OCI-LY7 (cell line): ENCODE measurements at regions of chr16 and their contacts with region 1.

Region 1: GRCh38 chr16:71961066-71962039 is 38.8 kb downstream of the PKD1L3 start:
- DNase-seq: peak; percentile 90
- H3K4me3 ChIP-seq: no peak overlapping the region
- H3K27ac ChIP-seq: peak overlapping the region; percentile 58
- H3K4me1 ChIP-seq: peaks cover 57% of the 10 kb centered on the region
- CTCF ChIP-seq: peak; percentile 96

Region 2: GRCh38 chr16:71564155-71564967 is 397.0 kb before region 1 on chr16:
- CTCF ChIA-PET with region 1: no interaction called
- POLR2A ChIA-PET with region 1: no interaction called
- intact Hi-C with region 1: loop called (anchors 5 kb)
- DNase-seq: no peak
- H3K4me3 ChIP-seq: peak overlapping the region; percentile 67
- H3K27ac ChIP-seq: peak overlapping the region; percentile 97
- H3K4me1 ChIP-seq: peaks cover 29% of the 10 kb centered on the region
- CTCF ChIP-seq: no peak

Region 3: GRCh38 chr16:71723537-71724319 is 237.6 kb before region 1 on chr16:
- CTCF ChIA-PET with region 1: no interaction called
- POLR2A ChIA-PET with region 1: interaction called, 4 read pairs
- intact Hi-C with region 1: loop called (anchors 5 kb)
- DNase-seq: peak; percentile 88
- H3K4me3 ChIP-seq: peak overlapping the region; percentile 94
- H3K27ac ChIP-seq: peak overlapping the region; percentile 66
- H3K4me1 ChIP-seq: peaks cover 52% of the 10 kb centered on the region
- CTCF ChIP-seq: peak; percentile 28; the same call in 1 of the 2 replicates

Region 4: DNA sequence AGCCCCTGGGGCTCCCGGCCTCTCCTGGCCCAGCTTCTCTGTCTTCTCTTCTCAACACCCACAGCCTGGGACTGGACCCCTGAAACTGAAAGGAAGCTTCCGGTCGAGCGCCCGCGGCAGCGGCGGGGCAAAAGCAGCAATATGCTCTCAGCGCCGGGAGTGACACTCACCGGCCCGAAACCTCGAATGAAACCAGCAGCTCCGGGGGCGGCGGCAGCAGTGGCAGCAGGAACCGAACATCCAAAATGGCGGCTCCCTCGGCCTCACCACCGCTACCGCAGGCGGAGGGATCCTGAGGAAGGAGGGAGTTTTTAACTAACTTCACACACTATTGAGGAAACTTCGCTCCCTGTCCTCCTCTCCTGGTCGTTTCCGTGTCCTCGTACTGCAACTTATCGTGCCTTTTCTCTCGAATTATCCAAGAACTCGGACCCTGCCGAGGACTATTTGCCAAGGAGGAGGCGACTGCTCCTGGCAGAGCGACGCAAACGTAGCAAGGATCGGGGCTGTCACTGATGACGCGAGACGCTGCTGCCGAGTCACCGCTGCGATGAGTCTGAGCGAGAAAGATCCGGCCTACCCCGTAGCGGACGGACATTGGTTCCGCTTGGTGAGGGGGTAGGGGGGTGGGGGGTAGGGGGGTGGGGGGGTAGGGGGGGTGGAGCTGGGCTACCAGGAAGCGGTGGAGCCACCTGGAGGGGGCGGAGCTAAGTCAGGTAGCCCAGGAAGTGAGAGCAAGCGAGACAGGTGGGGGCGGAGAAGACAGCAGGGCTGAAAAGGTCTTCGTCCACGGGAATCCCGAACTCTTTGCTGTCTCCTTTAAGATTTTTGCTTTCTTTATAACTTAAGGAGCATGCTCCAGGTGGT is 152.5 kb before region 1 on chr16 and contains the start of gene AP1G1:
- CTCF ChIA-PET with region 1: no interaction called
- POLR2A ChIA-PET with region 1: no interaction called
- intact Hi-C with region 1: loop called (anchors 2 kb)
- DNase-seq: peak; percentile 99
- H3K4me3 ChIP-seq: peak within 1 kb of the TSS; percentile 98
- H3K27ac ChIP-seq: peak within 1 kb of the TSS; percentile 85
- H3K4me1 ChIP-seq: peaks cover 23% of the 10 kb centered on the region
- CTCF ChIP-seq: no peak
- total RNA-seq, gene AP1G1: 57.3 and 57.9 TPM in 2 replicates

Region 5: DNA sequence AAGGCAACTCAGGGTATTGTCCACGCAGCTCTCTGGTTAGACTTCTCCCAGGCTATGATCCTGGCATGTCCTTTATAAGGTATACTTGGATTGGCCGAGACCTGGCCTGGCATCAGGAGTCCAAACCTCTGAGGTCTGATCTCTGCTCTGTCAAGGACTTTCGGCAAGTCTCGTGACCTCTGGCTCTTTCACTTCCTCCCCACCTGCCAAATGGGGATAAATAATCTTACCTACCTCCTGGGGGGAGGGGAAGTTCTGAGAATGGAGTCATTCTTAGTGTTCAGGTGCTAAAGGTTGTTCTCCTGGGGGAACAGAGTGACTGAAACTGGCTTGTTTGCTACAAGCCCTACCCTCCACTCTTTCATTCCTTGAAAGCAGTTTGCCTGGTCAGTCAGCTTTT is 107.9 kb before region 1 on chr16:
- CTCF ChIA-PET with region 1: no interaction called
- POLR2A ChIA-PET with region 1: no interaction called
- intact Hi-C with region 1: loop called (anchors 2 kb)
- DNase-seq: peak; percentile 87
- H3K4me3 ChIP-seq: peak overlapping the region; percentile 38
- H3K27ac ChIP-seq: no peak overlapping the region
- H3K4me1 ChIP-seq: peaks cover 37% of the 10 kb centered on the region
- CTCF ChIP-seq: no peak

Region 6: DNA sequence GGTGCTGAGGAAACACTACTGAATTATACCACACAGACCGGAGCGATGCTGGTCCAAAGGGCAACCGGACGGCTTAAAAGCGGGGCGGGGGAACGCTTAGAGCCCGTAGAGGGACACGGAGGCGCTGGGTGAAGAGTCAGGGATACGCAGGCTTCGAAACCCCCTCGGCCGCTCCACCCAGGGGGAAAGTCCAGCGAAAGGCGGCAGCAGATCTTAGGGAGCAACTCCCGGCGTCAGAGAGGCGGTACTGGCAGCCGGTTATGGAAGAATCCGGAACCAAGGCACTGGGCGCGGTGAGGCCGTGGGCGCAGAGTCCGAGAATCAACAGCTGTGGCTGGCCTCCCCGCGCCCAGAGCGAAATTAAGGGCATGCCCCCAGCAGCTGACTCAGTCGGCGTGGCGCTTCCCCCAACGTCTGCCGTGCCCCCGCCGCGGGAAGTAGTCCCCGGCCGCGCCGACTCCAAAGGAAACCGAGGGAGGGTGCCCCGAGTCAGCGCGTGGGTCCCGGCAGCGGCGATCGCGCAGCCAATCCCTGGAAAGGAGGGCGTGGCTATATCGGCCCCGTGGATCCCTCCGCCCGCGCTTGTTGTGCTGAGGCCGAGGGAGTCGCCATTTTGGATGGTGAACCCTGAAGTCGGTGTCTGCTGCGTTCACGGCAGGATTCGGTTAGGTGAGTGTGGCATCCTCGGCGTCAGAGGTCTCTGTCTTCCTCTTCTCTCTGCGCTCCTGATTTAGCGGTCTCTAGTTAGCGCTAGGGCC is 66.3 kb before region 1 on chr16 and contains the start of gene IST1:
- CTCF ChIA-PET with region 1: no interaction called
- POLR2A ChIA-PET with region 1: interaction called, 5 read pairs
- intact Hi-C with region 1: loop called (anchors 1 kb)
- DNase-seq: peak; percentile 99
- H3K4me3 ChIP-seq: peak within 1 kb of the TSS; percentile 95
- H3K27ac ChIP-seq: peak within 1 kb of the TSS; percentile 73
- H3K4me1 ChIP-seq: peaks cover 30% of the 10 kb centered on the region
- CTCF ChIP-seq: no peak
- total RNA-seq, gene IST1: 147 and 152 TPM in 2 replicates

Region 7: GRCh38 chr16:72008424-72009216 is 47.3 kb after region 1 on chr16 and contains the start of gene DHODH:
- CTCF ChIA-PET with region 1: no interaction called
- POLR2A ChIA-PET with region 1: no interaction called
- intact Hi-C with region 1: no loop called
- DNase-seq: peak; percentile 98
- H3K4me3 ChIP-seq: peak within 1 kb of the TSS; percentile 79
- H3K27ac ChIP-seq: peak within 1 kb of the TSS; percentile 52
- H3K4me1 ChIP-seq: peaks cover 6% of the 10 kb centered on the region
- CTCF ChIP-seq: no peak
- total RNA-seq, gene DHODH: 12.3 and 15.7 TPM in 2 replicates